ENCODE measurements at regions of chr7 and their contacts with region 1.

Region 1: DNA sequence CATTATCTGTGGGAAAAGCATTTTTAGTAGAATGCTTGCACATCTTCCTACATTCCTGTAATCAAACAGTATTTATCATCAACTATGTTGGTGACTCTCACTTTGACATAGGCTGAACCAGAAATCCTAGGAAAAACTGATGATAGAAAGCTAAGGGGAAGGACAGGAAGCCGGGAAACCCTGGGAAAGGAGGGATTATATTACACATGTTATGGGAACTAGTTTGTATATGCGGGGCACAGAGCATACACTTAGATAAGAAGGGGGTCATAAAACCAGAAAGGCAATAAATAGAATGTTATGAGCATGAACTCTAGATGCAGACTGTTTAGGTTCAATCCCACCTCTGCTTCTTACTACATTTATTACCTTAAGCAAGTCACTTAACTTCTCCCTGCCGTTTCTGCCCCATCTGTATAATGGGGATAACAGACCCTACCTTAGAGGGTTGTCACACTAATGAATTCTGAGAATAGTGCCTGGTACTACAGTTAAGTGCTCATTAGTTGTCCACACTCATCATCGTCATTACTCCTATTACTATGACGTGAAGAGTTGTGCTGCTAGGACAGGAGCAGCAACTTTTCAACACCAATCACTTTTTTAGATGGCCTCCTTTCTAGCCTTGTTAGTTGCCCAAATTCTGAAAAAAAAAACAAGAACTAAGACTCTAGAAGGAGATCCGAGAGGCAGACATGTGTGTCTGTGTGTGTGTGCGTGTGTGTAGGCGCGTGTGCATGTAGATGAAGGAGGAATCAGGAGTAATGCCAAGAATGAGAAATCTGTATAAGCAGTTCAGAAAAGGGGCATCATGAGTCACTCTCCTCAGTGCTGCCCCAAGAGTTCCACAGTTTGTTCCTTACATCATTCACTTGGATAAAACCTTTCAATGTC is 52.2 kb downstream of the KMT2C start:
- DNase-seq: no peak
- ATAC-seq: peak; percentile 18 to 21 (median 20)
- H3K4me3 ChIP-seq: no peak overlapping the region
- H3K4me3 Mint-ChIP-seq: no peak overlapping the region
- H3K27ac ChIP-seq: no peak overlapping the region
- H3K27ac Mint-ChIP-seq: no peak overlapping the region
- H3K4me1 ChIP-seq: no peaks in the 10 kb centered on the region
- H3K4me1 Mint-ChIP-seq: peaks cover 26 to 30% of the 10 kb centered on the region in 2 donors
- H3K27me3 ChIP-seq: no peaks in the 10 kb centered on the region
- H3K27me3 Mint-ChIP-seq: no peaks in the 10 kb centered on the region
- CTCF ChIP-seq: no peak

Region 2: GRCh38 chr7:152120210-152120609 is 263.4 kb before region 1 on chr7:
- intact Hi-C with region 1: no loop called
- DNase-seq: no peak
- ATAC-seq: no peak
- H3K4me3 ChIP-seq: no peak overlapping the region
- H3K4me3 Mint-ChIP-seq: no peak overlapping the region
- H3K27ac ChIP-seq: no peak overlapping the region
- H3K27ac Mint-ChIP-seq: no peak overlapping the region
- H3K4me1 ChIP-seq: no peaks in the 10 kb centered on the region
- H3K4me1 Mint-ChIP-seq: peaks cover 0 to 6% of the 10 kb centered on the region in 2 donors
- H3K27me3 ChIP-seq: no peaks in the 10 kb centered on the region
- H3K27me3 Mint-ChIP-seq: no peaks in the 10 kb centered on the region
- CTCF ChIP-seq: no peak

Region 3: DNA sequence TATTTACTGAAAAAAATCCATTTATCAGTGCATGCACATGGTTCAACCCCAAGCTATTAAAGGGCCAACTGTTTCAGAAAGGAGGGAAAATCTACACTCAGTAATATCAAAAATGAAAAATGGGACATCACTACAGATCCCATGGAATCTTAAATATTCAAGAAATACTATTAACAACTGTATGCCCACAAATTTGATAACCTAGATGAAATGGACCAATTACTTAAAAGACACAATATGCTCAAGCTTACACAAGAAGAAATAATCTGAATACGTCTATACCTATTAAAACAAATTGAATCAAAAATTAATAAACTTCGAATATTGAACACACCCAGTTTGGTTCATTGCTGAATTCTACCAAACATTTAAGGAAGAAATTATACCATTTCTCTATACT is 35.7 kb before region 1 on chr7:
- intact Hi-C with region 1: loop called (anchors 5 kb)
- DNase-seq: no peak
- ATAC-seq: no peak
- H3K4me3 ChIP-seq: no peak overlapping the region
- H3K4me3 Mint-ChIP-seq: no peak overlapping the region
- H3K27ac ChIP-seq: no peak overlapping the region
- H3K27ac Mint-ChIP-seq: no peak overlapping the region
- H3K4me1 ChIP-seq: peaks cover 12% of the 10 kb centered on the region
- H3K4me1 Mint-ChIP-seq: peaks cover 33 to 37% of the 10 kb centered on the region in 2 donors
- H3K27me3 ChIP-seq: no peaks in the 10 kb centered on the region
- H3K27me3 Mint-ChIP-seq: no peaks in the 10 kb centered on the region
- CTCF ChIP-seq: no peak

Region 4: DNA sequence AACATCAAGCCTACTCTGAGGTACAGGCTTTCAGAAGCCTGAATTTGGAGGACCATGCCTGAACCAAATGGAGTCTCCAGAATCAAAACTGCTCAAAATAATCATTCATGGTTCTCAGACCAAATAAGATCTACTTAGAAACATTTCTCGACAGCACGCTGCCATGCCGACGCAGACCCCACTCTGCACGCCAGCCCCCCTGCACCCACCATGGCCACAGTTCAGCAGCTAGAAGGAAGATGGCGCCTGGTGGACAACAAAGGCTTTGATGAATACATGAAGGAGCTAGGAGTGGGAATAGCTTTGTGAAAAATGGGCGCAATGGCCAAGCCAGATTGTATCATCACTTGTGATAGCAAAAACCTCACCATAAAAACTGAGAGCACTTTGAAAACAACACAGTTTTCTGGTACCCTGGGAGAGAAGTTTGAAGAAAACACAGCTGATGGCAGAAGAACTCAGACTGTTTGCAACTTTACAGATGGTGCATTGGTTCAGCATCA is 58.8 kb after region 1 on chr7:
- intact Hi-C with region 1: no loop called
- DNase-seq: no peak
- ATAC-seq: no peak
- H3K4me3 ChIP-seq: no peak overlapping the region
- H3K4me3 Mint-ChIP-seq: no peak overlapping the region
- H3K27ac ChIP-seq: no peak overlapping the region
- H3K27ac Mint-ChIP-seq: no peak overlapping the region
- H3K4me1 ChIP-seq: peaks cover 1% of the 10 kb centered on the region
- H3K4me1 Mint-ChIP-seq: peaks cover 2 to 3% of the 10 kb centered on the region in 2 donors
- H3K27me3 ChIP-seq: no peaks in the 10 kb centered on the region
- H3K27me3 Mint-ChIP-seq: peaks cover 0 to 8% of the 10 kb centered on the region in 2 donors
- CTCF ChIP-seq: no peak

Measured in natural killer cell (primary cell).